Gastrocnemius medialis (tissue), 4 donors: ENCODE measurements at regions of chr18 and their contacts with region 1.

Region 1: DNA sequence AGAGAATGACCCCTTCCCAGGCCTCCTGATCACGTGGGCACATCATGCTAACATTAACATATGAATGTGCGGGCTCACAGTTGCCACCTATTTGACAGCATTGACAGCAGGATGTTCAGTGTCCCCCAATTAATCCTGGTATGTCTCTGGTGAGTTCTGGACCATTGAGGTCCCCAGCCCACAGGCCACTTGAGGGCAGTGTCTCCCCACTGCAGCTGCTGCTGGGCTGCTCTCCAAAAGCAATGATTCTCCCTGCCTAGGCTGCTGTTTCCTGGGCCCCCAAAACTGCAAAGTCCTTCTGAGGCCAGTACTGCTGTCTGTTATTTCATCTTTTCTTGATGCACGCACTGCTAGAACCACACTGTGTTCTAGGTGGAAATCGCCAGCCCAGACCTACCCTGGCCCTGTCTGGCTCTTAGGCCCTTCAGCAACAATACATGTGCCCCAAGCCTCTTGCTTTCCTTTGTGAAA is 52.7 kb upstream of the MAPK4 start:
- DNase-seq: peak in 1 of 2 donors; percentile 33
- ATAC-seq: peak; percentile 69 to 85
- H3K4me3 ChIP-seq: no peak overlapping the region
- H3K27ac ChIP-seq: no peak overlapping the region
- H3K4me1 ChIP-seq: no peaks in the 10 kb centered on the region
- H3K27me3 ChIP-seq: no peaks in the 10 kb centered on the region
- CTCF ChIP-seq: peak; percentile 43 to 72 (median 66)
- POLR2A ChIP-seq: no peak

Region 2: DNA sequence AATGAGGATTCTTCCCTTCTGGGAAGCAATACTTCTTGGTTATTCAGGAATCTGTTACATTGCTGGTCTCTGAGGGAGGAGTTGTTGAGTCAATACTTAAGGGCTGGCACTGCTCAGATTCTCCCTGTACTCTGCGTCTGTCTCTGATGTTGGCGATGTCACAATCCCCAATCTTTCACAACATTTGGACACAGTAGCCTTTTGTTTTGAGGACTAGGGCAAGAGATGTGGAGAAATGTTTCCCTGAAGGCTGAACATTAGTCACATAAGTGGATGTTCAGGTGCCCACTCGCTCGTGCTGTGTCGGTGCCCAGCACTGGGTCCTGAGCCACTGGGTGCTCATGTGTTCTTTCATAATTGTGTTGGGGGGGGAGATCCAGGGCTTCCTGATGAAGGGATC is 107.7 kb after region 1 on chr18:
- in situ Hi-C with region 1: no loop called
- intact Hi-C with region 1: no loop called
- DNase-seq: peak; percentile 75 to 80
- ATAC-seq: peak; percentile 97 to 98
- H3K4me3 ChIP-seq: no peak overlapping the region
- H3K27ac ChIP-seq: peak overlapping the region; percentile 52 to 79 (median 72)
- H3K4me1 ChIP-seq: peaks cover 0 to 10% of the 10 kb centered on the region in 2 donors
- H3K27me3 ChIP-seq: no peaks in the 10 kb centered on the region
- CTCF ChIP-seq: no peak
- POLR2A ChIP-seq: no peak

Region 3: DNA sequence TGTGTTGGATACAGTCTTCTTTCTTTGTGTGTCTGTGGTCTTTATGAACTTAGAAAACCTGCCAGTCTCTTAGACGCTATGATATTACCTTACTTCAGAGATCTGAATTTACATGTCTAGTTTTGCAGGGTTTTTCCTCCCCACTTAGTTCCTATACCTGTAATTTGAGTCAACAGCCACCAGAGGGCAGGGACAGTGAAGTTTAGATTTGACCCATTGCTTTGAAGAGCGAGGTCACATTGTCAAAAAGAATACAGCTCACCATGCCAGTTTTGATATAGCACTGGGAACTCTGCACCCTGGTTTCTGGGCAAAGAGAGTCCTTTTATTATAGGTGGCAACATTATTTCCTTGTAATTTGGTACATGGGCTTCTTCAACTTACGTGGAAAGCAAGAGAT is 155.0 kb after region 1 on chr18:
- in situ Hi-C with region 1: no loop called
- intact Hi-C with region 1: loop called (anchors 1 kb)
- DNase-seq: no peak
- ATAC-seq: no peak
- H3K4me3 ChIP-seq: no peak overlapping the region
- H3K27ac ChIP-seq: no peak overlapping the region
- H3K4me1 ChIP-seq: peaks cover 33 to 50% of the 10 kb centered on the region in 2 donors
- H3K27me3 ChIP-seq: no peaks in the 10 kb centered on the region
- CTCF ChIP-seq: peak in 1 of 5 experiments; percentile 36
- POLR2A ChIP-seq: no peak

Region 4: GRCh38 chr18:50786864-50787263 is 279.7 kb after region 1 on chr18:
- in situ Hi-C with region 1: loop called (anchors 10 to 25 kb)
- intact Hi-C with region 1: loop called (anchors 1 kb)
- DNase-seq: no peak
- ATAC-seq: no peak
- H3K4me3 ChIP-seq: no peak overlapping the region
- H3K27ac ChIP-seq: no peak overlapping the region
- H3K4me1 ChIP-seq: no peaks in the 10 kb centered on the region
- H3K27me3 ChIP-seq: no peaks in the 10 kb centered on the region
- CTCF ChIP-seq: no peak
- POLR2A ChIP-seq: no peak

Region 5: DNA sequence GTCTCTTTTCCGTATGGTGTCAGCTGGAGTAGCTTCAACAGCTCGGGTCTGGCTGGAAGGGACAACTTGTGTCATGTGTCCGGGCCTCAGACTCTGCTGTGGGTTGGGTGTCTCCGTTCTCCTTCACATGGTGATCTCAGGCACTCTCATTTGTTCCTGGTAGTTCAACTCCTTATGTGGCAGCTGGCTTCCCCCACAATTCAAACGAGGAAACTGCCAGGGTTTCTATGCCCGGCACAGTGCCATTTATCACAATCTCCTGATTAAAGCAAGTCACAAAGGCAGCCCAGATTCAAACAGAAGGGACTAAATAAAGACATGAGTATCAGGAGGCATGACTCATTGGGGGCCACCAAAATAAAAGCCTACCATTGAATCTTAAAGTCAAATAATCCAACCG is 290.0 kb after region 1 on chr18:
- in situ Hi-C with region 1: loop called in 1 of 4 experiments (anchors 25 kb)
- intact Hi-C with region 1: no loop called
- DNase-seq: no peak
- ATAC-seq: no peak
- H3K4me3 ChIP-seq: no peak overlapping the region
- H3K27ac ChIP-seq: no peak overlapping the region
- H3K4me1 ChIP-seq: no peaks in the 10 kb centered on the region
- H3K27me3 ChIP-seq: no peaks in the 10 kb centered on the region
- CTCF ChIP-seq: no peak
- POLR2A ChIP-seq: no peak

Region 6: DNA sequence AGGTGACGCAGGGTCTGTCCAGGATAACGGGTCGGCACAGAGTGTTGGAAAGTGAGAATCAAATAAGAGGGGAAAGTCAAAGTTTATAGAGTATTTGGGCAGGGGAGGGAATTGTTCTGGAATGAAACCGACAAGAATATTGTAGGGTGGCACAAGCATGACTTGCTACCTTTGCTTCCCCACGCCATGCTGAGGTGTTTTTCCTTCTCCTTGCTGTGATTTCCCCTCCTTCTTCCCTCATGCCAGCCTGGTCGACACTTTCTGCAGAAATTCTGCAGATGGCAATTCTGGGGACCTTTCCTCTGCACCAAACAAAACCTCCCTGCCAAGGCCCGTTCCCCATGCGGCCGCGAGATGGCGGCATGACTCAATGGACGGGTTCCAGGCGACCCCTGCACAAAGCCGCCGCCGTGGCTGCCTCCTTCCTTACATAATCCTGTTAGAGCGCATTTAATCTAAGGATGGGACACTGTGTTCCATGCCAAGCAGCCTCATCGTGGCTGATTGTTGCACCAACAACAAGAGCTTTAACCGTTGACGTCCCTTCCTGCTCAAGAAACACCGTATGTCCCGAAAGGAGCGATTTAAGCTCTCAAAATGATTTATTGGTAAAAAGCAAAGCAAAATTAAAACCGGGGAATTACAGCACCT is 312.7 kb after region 1 on chr18 and contains the start of gene MRO:
- in situ Hi-C with region 1: no loop called
- intact Hi-C with region 1: no loop called
- DNase-seq: peak; percentile 75 to 83
- ATAC-seq: peak; percentile 82 to 88
- H3K4me3 ChIP-seq: peak within 1 kb of the TSS; percentile 42 to 51 (median 50)
- H3K27ac ChIP-seq: peak within 1 kb of the TSS; percentile 53 to 69 (median 64)
- H3K4me1 ChIP-seq: peaks cover 22 to 25% of the 10 kb centered on the region in 2 donors
- H3K27me3 ChIP-seq: no peaks in the 10 kb centered on the region
- CTCF ChIP-seq: peak; percentile 77 to 93 (median 91)
- POLR2A ChIP-seq: no peak
- total RNA-seq, gene MRO: 0.18 to 1.4 (median 0.49) TPM in 3 of 4 donors, not detected in the other

Region 7: GRCh38 chr18:50866765-50867164 is 359.6 kb after region 1 on chr18:
- in situ Hi-C with region 1: no loop called
- intact Hi-C with region 1: loop called (anchors 2 kb)
- DNase-seq: no peak
- ATAC-seq: peak; percentile 66 to 71
- H3K4me3 ChIP-seq: no peak overlapping the region
- H3K27ac ChIP-seq: peak overlapping the region in 1 of 4 donors; percentile 29
- H3K4me1 ChIP-seq: peaks cover 11 to 16% of the 10 kb centered on the region in 2 donors
- H3K27me3 ChIP-seq: no peaks in the 10 kb centered on the region
- CTCF ChIP-seq: peak in 1 of 5 experiments; percentile 33
- POLR2A ChIP-seq: no peak